GM23248 (cell line): ENCODE measurements at regions of chr9 and their contacts with region 1.

Region 1: GRCh38 chr9:12723409-12724028 is 30.3 kb downstream of the TYRP1 start:
- DNase-seq: peak; percentile 57
- H3K4me3 ChIP-seq: no peak overlapping the region
- H3K27ac ChIP-seq: no peak overlapping the region
- H3K4me1 ChIP-seq: 0 out of 2 replicates have a peak, but pooled peaks cover 5% of the 10 kb centered on the region
- H3K27me3 ChIP-seq: no peaks in the 10 kb centered on the region

Region 2: DNA sequence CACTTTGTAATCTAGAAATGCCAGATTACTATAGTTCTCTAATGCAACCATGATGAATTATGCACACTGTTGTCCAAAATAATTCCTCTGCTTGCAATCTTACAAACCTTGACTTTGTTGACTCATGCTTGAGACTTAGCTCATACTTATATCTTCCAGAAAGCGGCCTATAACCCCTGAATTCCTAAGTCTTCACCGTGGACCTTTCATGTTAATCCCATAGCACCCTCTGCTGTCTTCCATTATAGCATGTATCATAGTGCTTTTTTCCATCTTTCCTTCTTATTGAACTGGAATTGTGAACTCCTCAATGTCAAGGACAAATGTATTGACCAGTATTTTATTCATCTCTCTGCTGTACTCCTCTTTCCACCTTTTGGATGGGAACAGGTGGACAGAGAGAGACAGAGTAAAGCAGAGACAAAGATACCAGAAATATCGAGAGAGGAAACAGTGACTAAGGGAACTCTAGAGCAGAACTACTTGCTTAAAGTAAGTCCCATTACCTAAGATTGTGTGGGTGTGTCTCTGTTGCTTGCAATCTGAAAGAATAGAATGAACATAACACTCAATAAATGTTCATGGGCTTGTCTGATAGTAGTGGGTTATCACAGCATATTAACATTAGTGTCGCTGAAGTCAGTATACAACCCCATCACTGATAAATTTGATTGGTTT is 161.4 kb after region 1 on chr9:
- in situ Hi-C with region 1: loop called (anchors 10 kb)
- DNase-seq: peak; percentile 85
- H3K4me3 ChIP-seq: no peak overlapping the region
- H3K27ac ChIP-seq: no peak overlapping the region
- H3K4me1 ChIP-seq: peaks cover 40% of the 10 kb centered on the region
- H3K27me3 ChIP-seq: no peaks in the 10 kb centered on the region

Region 3: GRCh38 chr9:13088720-13089427 is 365.4 kb after region 1 on chr9:
- in situ Hi-C with region 1: loop called (anchors 5 kb)
- DNase-seq: peak; percentile 62
- H3K4me3 ChIP-seq: peak overlapping the region; percentile 68
- H3K27ac ChIP-seq: no peak overlapping the region
- H3K4me1 ChIP-seq: peaks cover 14% of the 10 kb centered on the region
- H3K27me3 ChIP-seq: no peaks in the 10 kb centered on the region